ENCODE measurements at regions of chr1 and their contacts with region 1.

Region 1: DNA sequence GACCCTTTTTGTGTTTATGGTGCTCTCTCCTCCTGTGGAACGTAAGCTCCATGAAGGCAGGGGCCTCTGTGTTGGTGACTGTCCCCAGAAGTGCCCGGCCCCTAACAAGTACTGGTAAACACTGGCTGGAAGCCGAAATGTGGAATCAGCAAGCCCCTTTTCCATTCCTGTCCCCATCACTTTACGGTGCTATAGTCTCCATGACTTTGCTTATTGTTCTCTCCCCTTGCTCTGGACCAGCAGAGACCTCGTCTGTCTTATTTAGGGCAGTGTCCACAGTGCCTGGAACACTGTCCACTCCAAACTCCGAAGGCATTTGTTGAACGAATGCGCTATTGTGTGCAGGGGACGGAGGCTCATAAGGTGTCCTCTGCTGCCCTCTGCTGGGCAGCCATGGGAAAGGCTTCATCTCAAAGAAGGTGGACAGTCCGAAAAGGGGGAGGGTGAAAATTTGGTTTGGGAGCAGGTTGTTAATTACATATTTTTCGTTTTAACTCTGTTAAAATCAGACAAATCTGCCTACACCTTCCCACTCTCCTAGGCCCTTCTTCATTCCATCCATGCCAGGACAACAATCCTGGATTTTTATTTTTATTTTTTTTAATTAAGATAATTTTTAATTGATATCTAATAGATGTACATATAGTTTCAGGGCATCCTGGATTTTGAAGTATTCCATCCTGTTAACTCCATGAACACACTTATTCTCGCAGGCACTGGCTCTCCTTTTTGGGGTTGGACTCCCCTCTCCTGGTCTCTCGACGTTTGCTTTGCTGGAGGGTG is 115.6 kb downstream of the PGBD5 start:
- DNase-seq: peak; percentile 67 to 85
- ATAC-seq: peak; percentile 89 to 94 (median 92)
- H3K4me3 ChIP-seq: no peak overlapping the region
- H3K27ac ChIP-seq: no peak overlapping the region
- H3K4me1 ChIP-seq: peaks cover 8% of the 10 kb centered on the region
- H3K27me3 ChIP-seq: no peaks in the 10 kb centered on the region
- CTCF ChIP-seq: peak; percentile 97

Region 2: DNA sequence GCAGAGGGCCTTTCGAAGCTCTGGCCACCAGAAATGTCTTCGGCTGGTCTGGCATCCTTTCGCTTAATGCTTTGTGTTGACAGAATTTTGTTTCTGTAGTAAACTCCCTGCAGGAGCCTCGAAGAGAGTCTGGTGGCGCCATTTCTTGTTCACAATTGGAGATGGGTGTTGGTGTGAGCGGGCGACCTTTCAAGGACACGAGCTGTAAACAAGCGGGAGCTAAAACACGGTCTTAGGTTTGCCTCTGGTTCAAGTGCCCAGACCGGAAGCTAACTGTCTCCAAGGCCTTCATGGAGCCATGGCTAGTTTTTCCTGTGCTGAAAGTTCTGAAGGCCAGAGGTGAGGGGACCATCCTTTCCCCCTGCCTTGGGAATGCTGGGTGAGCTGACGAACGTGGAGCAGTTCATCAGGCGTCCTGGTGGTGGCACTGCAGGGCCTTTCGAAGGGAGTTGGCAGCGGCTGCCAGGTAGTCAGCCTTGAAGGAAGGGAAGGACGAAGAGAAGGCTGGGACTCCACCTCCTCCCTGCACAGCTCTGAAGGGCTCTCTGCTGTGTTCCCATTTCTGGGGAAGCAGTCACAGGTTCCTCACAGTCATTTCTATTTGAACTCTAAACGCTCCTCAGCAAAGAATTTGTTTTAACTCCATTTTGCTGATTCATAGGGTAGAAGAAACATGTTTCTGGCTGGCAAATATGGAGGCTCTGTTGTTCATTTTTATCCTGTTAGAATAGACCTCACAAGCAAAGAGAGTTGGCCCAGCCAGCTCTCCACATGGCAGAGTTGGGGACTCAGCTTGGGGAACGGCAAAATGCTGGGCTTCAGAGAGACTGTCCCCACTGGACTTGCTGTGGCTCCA is 649.3 kb before region 1 on chr1:
- intact Hi-C with region 1: loop called (anchors 1 to 2 kb)
- DNase-seq: peak; percentile 79 to 86
- ATAC-seq: peak; percentile 88 to 96 (median 94)
- H3K4me3 ChIP-seq: no peak overlapping the region
- H3K27ac ChIP-seq: no peak overlapping the region
- H3K4me1 ChIP-seq: no peaks in the 10 kb centered on the region
- H3K27me3 ChIP-seq: no peaks in the 10 kb centered on the region
- CTCF ChIP-seq: peak; percentile 87

Region 3: DNA sequence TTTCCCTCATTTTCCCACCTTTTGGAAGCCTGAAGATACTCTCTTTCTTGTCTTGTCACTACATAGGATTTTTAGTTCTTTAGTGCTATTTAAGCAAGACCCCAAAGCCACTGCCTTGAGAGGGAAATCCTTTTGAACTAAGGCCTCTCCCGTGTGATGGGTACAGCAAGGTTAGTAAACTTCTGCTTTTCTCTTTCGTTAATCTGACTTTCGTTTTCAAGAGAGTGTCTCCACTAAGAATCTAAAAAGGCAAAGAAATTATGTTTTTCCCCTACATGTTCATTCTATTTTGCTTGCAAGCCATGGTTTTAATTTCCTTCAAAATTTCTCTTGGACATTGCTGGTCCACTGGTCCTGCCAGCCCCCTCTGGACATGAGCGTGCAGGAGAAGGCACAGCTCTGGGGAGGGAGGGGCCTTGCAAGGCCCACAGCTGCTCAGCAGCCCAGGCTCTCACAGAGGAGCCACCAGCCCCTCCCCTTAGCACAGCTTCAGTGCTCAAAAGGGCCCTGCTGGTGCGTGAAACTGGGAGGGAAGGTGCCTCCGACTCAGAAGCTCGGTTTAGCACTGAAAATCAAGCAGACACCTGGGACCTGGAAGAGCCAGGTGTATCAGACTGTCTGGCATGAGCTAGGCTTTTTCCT is 454.4 kb before region 1 on chr1:
- intact Hi-C with region 1: loop called in 1 of 2 experiments (anchors 10 kb)
- DNase-seq: no peak
- ATAC-seq: peak; percentile 70 to 83 (median 81)
- H3K4me3 ChIP-seq: peak overlapping the region; percentile 34
- H3K27ac ChIP-seq: no peak overlapping the region
- H3K4me1 ChIP-seq: peaks cover 5% of the 10 kb centered on the region
- H3K27me3 ChIP-seq: no peaks in the 10 kb centered on the region
- CTCF ChIP-seq: no peak

Region 4: GRCh38 chr1:229887043-229887822 is 423.3 kb before region 1 on chr1:
- intact Hi-C with region 1: loop called in 1 of 2 experiments (anchors 10 kb)
- DNase-seq: no peak
- ATAC-seq: peak; percentile 86 to 88 (median 86)
- H3K4me3 ChIP-seq: no peak overlapping the region
- H3K27ac ChIP-seq: peak overlapping the region; percentile 98
- H3K4me1 ChIP-seq: peaks cover 36% of the 10 kb centered on the region
- H3K27me3 ChIP-seq: no peaks in the 10 kb centered on the region
- CTCF ChIP-seq: no peak

Region 5: DNA sequence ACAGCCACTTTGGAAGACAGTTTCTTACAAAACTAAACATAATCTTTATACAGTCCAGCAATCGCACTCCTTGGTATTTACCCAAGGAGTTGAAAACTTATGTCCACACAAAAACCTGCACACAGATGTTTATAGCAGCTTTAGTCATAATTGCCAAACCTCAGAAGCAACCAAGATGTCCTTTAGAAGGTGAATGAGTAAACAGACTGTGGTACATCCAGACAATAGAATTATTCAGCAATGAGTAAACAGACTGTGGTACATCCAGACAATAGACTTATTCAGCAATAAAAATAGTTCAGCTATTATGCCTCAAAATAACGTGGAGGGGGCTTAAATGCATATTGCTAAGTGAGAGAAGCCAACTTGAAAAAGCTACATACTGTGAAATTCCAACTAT is 330.6 kb before region 1 on chr1:
- intact Hi-C with region 1: loop called in 1 of 2 experiments (anchors 10 kb)
- DNase-seq: no peak
- ATAC-seq: no peak
- H3K4me3 ChIP-seq: no peak overlapping the region
- H3K27ac ChIP-seq: no peak overlapping the region
- H3K4me1 ChIP-seq: no peaks in the 10 kb centered on the region
- H3K27me3 ChIP-seq: peaks cover 0 to 3% (median 0%) of the 10 kb centered on the region in 3 donors
- CTCF ChIP-seq: no peak

Region 6: GRCh38 chr1:230222678-230223077 is 87.9 kb before region 1 on chr1:
- intact Hi-C with region 1: loop called in 1 of 2 experiments (anchors 5 kb)
- DNase-seq: no peak
- ATAC-seq: no peak
- H3K4me3 ChIP-seq: no peak overlapping the region
- H3K27ac ChIP-seq: no peak overlapping the region
- H3K4me1 ChIP-seq: peaks cover 36% of the 10 kb centered on the region
- H3K27me3 ChIP-seq: no peaks in the 10 kb centered on the region
- CTCF ChIP-seq: peak; percentile 7

Measured in psoas muscle (tissue), 8 donors.